ENCODE measurements at regions of chr13 and their contacts with region 1.

Region 1: DNA sequence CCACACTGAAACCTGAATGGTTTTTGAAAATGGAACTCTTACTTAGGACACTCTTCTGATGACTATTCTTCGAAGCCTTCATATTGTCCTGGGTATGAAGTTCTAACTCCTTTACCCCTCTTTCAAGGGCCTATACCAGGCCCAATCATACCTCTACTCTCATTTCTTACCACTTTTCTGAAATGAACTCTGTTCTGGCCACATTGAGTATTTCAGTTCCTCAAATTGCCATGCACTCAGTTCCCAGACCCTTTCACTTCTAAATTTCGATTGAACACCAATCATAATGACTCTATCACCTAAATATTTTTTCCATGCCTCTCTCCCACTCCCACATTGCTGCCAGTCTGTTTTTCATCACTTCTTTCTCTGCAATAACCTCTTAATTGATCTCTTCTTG is 53.7 kb downstream of the LACC1 start:
- DNase-seq: no peak
- ATAC-seq: no peak
- H3K4me3 ChIP-seq: no peak overlapping the region
- H3K4me3 Mint-ChIP-seq: no peak overlapping the region
- H3K27ac ChIP-seq: no peak overlapping the region
- H3K27ac Mint-ChIP-seq: no peak overlapping the region
- H3K4me1 ChIP-seq: no peaks in the 10 kb centered on the region
- H3K4me1 Mint-ChIP-seq: no peaks in the 10 kb centered on the region
- H3K27me3 ChIP-seq: no peaks in the 10 kb centered on the region
- H3K27me3 Mint-ChIP-seq: peaks cover 9 to 32% (median 23%) of the 10 kb centered on the region in 5 donors

Region 2: DNA sequence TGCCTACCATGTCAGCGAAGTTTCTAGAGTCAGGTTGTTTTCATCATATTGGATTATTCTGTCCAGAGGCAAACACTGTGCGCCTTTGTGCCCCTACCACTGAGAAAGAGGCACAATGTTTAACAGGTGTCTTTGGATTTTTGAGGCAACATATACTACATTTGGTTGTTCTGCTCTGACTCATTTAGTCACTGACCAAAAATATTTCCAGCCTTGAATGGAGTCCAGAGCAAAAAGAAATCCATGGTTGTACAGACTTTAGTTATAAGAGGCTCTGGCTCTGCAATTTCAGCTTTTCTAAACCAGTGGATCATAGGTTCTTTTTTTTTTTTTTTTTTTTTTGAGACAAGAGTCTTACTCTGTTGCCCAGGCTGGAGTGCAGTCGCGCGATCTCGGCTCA is 17.9 kb before region 1 on chr13:
- CTCF ChIA-PET with region 1: no interaction called
- POLR2A ChIA-PET with region 1: no interaction called
- intact Hi-C with region 1: no loop called
- DNase-seq: no peak
- ATAC-seq: no peak
- H3K4me3 ChIP-seq: no peak overlapping the region
- H3K4me3 Mint-ChIP-seq: no peak overlapping the region
- H3K27ac ChIP-seq: no peak overlapping the region
- H3K27ac Mint-ChIP-seq: no peak overlapping the region
- H3K4me1 ChIP-seq: no peaks in the 10 kb centered on the region
- H3K4me1 Mint-ChIP-seq: no peaks in the 10 kb centered on the region
- H3K27me3 ChIP-seq: no peaks in the 10 kb centered on the region
- H3K27me3 Mint-ChIP-seq: peaks cover 0 to 33% (median 15%) of the 10 kb centered on the region in 5 donors

Region 3: DNA sequence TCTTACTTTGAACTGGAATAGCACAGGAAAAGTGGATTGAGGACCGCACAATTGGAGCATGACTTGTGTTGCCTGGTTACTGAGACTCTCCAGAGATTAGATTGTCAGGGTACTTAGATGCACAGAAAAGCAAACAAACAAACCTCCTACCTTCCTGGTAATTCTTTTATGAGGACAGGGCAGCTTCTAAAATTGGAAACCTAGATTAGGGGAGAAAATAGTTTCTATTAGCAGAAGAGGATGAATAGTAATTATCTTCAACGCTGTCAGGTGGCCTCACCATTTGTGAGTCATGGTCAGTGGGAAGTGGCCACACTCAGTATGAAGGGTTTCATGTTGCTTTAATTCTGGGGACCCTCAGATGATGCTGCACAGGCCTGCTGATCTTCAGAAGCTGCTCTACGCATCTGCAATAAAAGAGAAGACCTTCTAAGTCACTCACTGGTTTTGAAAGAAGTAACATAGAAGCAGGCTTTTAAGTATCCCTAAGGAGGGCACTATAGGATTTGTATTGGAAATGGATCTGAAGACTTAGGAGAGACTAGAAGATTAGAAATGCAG is 53.1 kb after region 1 on chr13:
- CTCF ChIA-PET with region 1: no interaction called
- POLR2A ChIA-PET with region 1: no interaction called
- intact Hi-C with region 1: loop called in 1 of 2 experiments (anchors 10 kb)
- DNase-seq: no peak
- ATAC-seq: no peak
- H3K4me3 ChIP-seq: no peak overlapping the region
- H3K4me3 Mint-ChIP-seq: no peak overlapping the region
- H3K27ac ChIP-seq: no peak overlapping the region
- H3K27ac Mint-ChIP-seq: no peak overlapping the region
- H3K4me1 ChIP-seq: no peaks in the 10 kb centered on the region
- H3K4me1 Mint-ChIP-seq: no peaks in the 10 kb centered on the region
- H3K27me3 ChIP-seq: no peaks in the 10 kb centered on the region
- H3K27me3 Mint-ChIP-seq: peaks cover under 1 to 12% (median 4%) of the 10 kb centered on the region in 5 donors

Region 4: DNA sequence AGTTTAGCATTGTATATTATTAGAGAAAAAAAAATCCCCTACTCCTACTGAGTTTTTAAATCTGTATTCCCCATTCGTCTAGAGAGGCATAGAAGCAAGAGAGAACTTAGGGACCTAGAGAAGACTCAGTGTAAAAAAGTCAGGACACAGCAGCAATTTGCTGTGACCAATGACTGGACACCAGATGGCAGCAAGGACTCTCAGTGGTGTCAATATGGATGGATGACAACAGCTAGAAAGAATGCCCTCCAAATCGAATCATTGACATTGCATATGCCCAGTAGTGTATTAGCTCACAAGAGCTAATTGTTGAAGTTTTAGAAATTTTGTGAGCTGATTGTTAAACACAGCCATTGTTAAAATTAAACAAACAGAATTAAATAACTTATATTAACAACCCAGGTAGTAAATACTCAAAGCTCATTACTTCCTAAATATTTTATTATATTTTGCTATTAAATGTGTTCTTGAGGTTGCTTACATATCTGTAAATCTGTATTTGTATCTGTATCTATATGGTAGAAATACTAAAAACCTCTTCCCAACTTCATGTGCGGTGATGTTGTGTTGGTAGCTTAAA is 1874.2 kb after region 1 on chr13:
- CTCF ChIA-PET with region 1: no interaction called
- POLR2A ChIA-PET with region 1: no interaction called
- intact Hi-C with region 1: no loop called
- DNase-seq: peak in 3 of 9 donors; percentile 16 to 23 (median 20)
- ATAC-seq: peak; percentile 48
- H3K4me3 ChIP-seq: no peak overlapping the region
- H3K4me3 Mint-ChIP-seq: no peak overlapping the region
- H3K27ac ChIP-seq: no peak overlapping the region
- H3K27ac Mint-ChIP-seq: no peak overlapping the region
- H3K4me1 ChIP-seq: no peaks in the 10 kb centered on the region
- H3K4me1 Mint-ChIP-seq: peaks cover 0 to 12% (median 4%) of the 10 kb centered on the region in 7 donors
- H3K27me3 ChIP-seq: no peaks in the 10 kb centered on the region
- H3K27me3 Mint-ChIP-seq: no peaks in the 10 kb centered on the region

Measured in naive thymus-derived CD4-positive, alpha-beta T cell (primary cell).